PC-3 (cell line): ENCODE measurements at regions of chr19 and their contacts with region 1.

Region 1: GRCh38 chr19:48110350-48110966 is at the start of gene PLA2G4C:
- DNase-seq: peak; percentile 85
- ATAC-seq: peak; percentile 68
- H3K4me3 ChIP-seq: peak within 1 kb of the TSS; percentile 66
- H3K27ac ChIP-seq: peak within 1 kb of the TSS; percentile 70
- H3K4me1 ChIP-seq: 0 out of 2 replicates have a peak, but pooled peaks cover 4% of the 10 kb centered on the region
- H3K27me3 ChIP-seq: no peaks in the 10 kb centered on the region
- CTCF ChIP-seq: no peak
- total RNA-seq, gene PLA2G4C: 0.63 and 2.6 TPM in 2 replicates

Region 2: GRCh38 chr19:48152551-48152950 is 42.1 kb after region 1 on chr19:
- CTCF ChIA-PET with region 1: no interaction called
- POLR2A ChIA-PET with region 1: no interaction called
- intact Hi-C with region 1: loop called (anchors 1 kb)
- DNase-seq: peak; percentile 67
- ATAC-seq: peak; percentile 41
- H3K4me3 ChIP-seq: no peak overlapping the region
- H3K27ac ChIP-seq: no peak overlapping the region
- H3K4me1 ChIP-seq: no peaks in the 10 kb centered on the region
- H3K27me3 ChIP-seq: no peaks in the 10 kb centered on the region
- CTCF ChIP-seq: peak; percentile 80